CD8-positive, alpha-beta T cell (primary cell): ENCODE measurements at regions of chr5 and their contacts with region 1.

Region 1: GRCh38 chr5:73454351-73455036 is 5.9 kb upstream of the FOXD1 start:
- DNase-seq: peak in 5 of 9 experiments; percentile 27 to 71 (median 45)
- ATAC-seq: peak; percentile 82
- H3K4me3 ChIP-seq: no peak overlapping the region
- H3K4me3 Mint-ChIP-seq: no peak overlapping the region
- H3K27ac ChIP-seq: no peak overlapping the region
- H3K27ac Mint-ChIP-seq: no peak overlapping the region
- H3K4me1 ChIP-seq: peaks cover 5% of the 10 kb centered on the region
- H3K4me1 Mint-ChIP-seq: peaks cover 6% of the 10 kb centered on the region
- H3K27me3 ChIP-seq: peaks cover 36 to 39% of the 10 kb centered on the region in 2 experiments
- H3K27me3 Mint-ChIP-seq: peaks cover 67% of the 10 kb centered on the region
- CTCF ChIP-seq: peak; percentile 71

Region 2: DNA sequence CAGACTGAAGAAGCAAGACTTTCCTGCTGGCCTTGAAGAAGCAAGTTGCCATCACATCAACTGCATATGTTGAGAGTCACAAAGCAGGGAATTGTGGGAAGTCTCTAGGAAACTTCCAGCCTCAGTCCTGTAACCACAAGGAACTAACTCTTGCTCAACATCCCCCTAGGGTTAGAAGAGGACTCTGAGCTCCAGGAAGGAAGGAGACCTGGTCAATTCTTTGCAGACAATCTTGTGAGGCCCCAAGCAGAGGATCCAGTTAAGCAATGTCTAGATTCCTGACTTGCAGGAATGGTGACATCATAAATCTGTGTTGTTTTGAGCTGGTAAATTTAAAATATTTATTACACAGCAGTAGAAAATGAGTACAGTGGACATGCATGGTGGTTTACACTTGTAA is 928.7 kb before region 1 on chr5:
- CTCF ChIA-PET with region 1: no interaction called
- POLR2A ChIA-PET with region 1: no interaction called
- intact Hi-C with region 1: no loop called
- DNase-seq: no peak
- ATAC-seq: no peak
- H3K4me3 ChIP-seq: no peak overlapping the region
- H3K4me3 Mint-ChIP-seq: no peak overlapping the region
- H3K27ac ChIP-seq: no peak overlapping the region
- H3K27ac Mint-ChIP-seq: no peak overlapping the region
- H3K4me1 ChIP-seq: no peaks in the 10 kb centered on the region
- H3K4me1 Mint-ChIP-seq: no peaks in the 10 kb centered on the region
- H3K27me3 ChIP-seq: no peaks in the 10 kb centered on the region
- H3K27me3 Mint-ChIP-seq: peaks cover 14% of the 10 kb centered on the region
- CTCF ChIP-seq: no peak

Region 3: GRCh38 chr5:73135429-73136054 is 319.0 kb before region 1 on chr5:
- CTCF ChIA-PET with region 1: no interaction called
- POLR2A ChIA-PET with region 1: no interaction called
- intact Hi-C with region 1: loop called in 1 of 2 experiments (anchors 5 kb)
- DNase-seq: peak in 2 of 9 experiments; percentile 19 to 52
- ATAC-seq: peak; percentile 42
- H3K4me3 ChIP-seq: no peak overlapping the region
- H3K4me3 Mint-ChIP-seq: no peak overlapping the region
- H3K27ac ChIP-seq: no peak overlapping the region
- H3K27ac Mint-ChIP-seq: no peak overlapping the region
- H3K4me1 ChIP-seq: no peaks in the 10 kb centered on the region
- H3K4me1 Mint-ChIP-seq: peaks cover 3% of the 10 kb centered on the region
- H3K27me3 ChIP-seq: peaks cover 0 to 8% of the 10 kb centered on the region in 2 experiments
- H3K27me3 Mint-ChIP-seq: peaks cover 39% of the 10 kb centered on the region
- CTCF ChIP-seq: peak; percentile 28

Region 4: GRCh38 chr5:73215891-73216610 is 238.4 kb before region 1 on chr5:
- CTCF ChIA-PET with region 1: interaction called, 42 read pairs
- POLR2A ChIA-PET with region 1: no interaction called
- intact Hi-C with region 1: loop called (anchors 1 to 2 kb)
- DNase-seq: peak; percentile 36 to 77 (median 56)
- ATAC-seq: peak; percentile 95
- H3K4me3 ChIP-seq: peak overlapping the region; percentile 13 to 39
- H3K4me3 Mint-ChIP-seq: peak overlapping the region; percentile 69
- H3K27ac ChIP-seq: no peak overlapping the region
- H3K27ac Mint-ChIP-seq: no peak overlapping the region
- H3K4me1 ChIP-seq: peaks cover 9% of the 10 kb centered on the region
- H3K4me1 Mint-ChIP-seq: peaks cover 11% of the 10 kb centered on the region
- H3K27me3 ChIP-seq: peaks cover 15 to 27% of the 10 kb centered on the region in 2 experiments
- H3K27me3 Mint-ChIP-seq: peaks cover 76% of the 10 kb centered on the region
- CTCF ChIP-seq: peak; percentile 65

Region 5: DNA sequence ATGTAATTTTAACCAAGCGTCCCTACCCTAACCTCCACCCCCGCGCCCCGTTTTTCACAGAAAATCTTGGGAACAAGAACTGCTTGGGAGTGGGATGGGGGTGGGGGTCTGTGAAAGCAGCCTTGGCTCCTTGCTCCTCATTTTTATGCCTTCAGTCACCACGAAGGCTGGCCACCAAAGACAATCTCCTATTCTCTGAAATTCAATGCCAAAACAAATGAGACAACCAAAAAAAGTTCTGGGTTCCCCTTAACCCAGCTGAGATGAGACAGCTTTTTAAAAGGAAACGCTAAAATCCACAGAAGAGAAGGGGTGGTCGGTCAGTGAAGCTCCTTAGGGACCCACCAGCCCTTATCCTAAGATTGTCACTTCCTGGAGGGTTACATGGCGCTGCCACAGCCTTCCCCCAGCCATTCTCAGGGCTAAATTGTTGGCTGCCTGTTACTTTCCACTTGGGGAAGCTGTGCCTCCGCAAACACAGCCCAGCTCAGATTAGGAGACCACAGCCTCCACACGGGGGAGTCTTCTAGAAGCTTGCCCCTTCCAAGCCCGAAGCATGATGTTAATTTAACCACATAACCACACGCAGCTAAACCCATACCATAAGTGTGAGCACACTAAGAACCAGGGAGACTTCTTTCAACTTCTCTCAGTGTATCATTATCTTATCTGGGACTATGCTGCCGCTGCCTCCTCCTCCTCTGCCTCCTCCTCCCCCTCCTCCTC is 142.2 kb before region 1 on chr5:
- CTCF ChIA-PET with region 1: interaction called, 4 read pairs
- POLR2A ChIA-PET with region 1: no interaction called
- intact Hi-C with region 1: loop called (anchors 2 to 5 kb)
- DNase-seq: peak in 4 of 9 experiments; percentile 12 to 69 (median 46)
- ATAC-seq: peak; percentile 57
- H3K4me3 ChIP-seq: no peak overlapping the region
- H3K4me3 Mint-ChIP-seq: no peak overlapping the region
- H3K27ac ChIP-seq: no peak overlapping the region
- H3K27ac Mint-ChIP-seq: no peak overlapping the region
- H3K4me1 ChIP-seq: no peaks in the 10 kb centered on the region
- H3K4me1 Mint-ChIP-seq: peaks cover 10% of the 10 kb centered on the region
- H3K27me3 ChIP-seq: peaks cover 11 to 23% of the 10 kb centered on the region in 2 experiments
- H3K27me3 Mint-ChIP-seq: peaks cover 74% of the 10 kb centered on the region
- CTCF ChIP-seq: no peak

Region 6: GRCh38 chr5:73412597-73412988 is 41.9 kb before region 1 on chr5:
- CTCF ChIA-PET with region 1: no interaction called
- POLR2A ChIA-PET with region 1: no interaction called
- intact Hi-C with region 1: no loop called
- DNase-seq: no peak
- ATAC-seq: no peak
- H3K4me3 ChIP-seq: no peak overlapping the region
- H3K4me3 Mint-ChIP-seq: no peak overlapping the region
- H3K27ac ChIP-seq: no peak overlapping the region
- H3K27ac Mint-ChIP-seq: no peak overlapping the region
- H3K4me1 ChIP-seq: no peaks in the 10 kb centered on the region
- H3K4me1 Mint-ChIP-seq: no peaks in the 10 kb centered on the region
- H3K27me3 ChIP-seq: peaks cover 1 to 8% of the 10 kb centered on the region in 2 experiments
- H3K27me3 Mint-ChIP-seq: peaks cover 55% of the 10 kb centered on the region
- CTCF ChIP-seq: no peak

Region 7: DNA sequence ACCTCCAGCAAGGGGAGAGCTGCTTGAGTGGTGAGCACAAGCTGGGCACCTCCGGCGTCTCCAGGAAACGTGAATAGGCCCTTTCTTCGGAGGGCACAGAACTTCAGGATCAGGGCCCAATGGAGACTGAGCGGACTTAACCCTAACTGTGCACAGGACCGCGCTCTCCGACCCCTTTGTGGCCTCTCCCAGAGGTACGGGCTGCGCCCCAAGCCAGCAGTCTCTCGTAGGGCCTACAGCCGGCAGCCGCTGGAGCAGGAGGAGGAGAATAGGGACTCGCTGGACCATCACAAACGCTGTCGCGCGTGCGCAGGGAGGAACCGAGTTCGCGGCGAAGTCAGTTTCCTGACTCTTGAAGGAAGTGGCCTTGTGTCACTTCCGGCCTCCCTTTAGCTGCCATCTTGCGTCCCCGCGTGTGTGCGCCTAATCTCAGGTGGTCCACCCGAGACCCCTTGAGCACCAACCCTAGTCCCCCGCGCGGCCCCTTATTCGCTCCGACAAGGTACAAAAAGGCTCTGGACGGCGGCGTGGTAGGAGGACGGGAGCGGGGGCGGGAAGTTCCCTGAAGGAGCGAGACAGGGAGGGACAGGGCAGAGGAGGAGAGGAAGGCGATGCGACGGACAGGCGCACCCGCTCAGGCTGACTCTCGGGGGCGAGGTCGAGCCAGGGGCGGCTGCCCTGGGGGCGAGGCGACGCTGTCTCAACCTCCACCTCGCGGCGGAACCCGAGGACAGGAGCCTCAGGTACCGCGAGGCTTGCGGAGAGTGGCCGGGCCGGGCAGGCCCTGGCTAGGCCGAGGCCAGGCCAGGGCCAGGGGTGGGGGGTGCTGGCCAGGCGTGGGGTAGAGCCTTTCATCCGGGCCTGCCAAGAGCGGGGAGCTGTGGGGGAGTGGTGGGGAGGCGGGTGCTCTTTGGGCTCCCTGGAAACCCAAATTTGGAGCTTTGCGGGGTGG is 43.8 kb after region 1 on chr5 and contains the start of gene BTF3:
- CTCF ChIA-PET with region 1: interaction called, 7 read pairs
- POLR2A ChIA-PET with region 1: no interaction called
- intact Hi-C with region 1: loop called (anchors 2 kb)
- DNase-seq: peak; percentile 77 to 97 (median 93)
- ATAC-seq: peak; percentile 89
- H3K4me3 ChIP-seq: peak within 1 kb of the TSS; percentile 95 to 96
- H3K4me3 Mint-ChIP-seq: peak within 1 kb of the TSS; percentile 97
- H3K27ac ChIP-seq: peak within 1 kb of the TSS; percentile 97 to 99
- H3K27ac Mint-ChIP-seq: peak within 1 kb of the TSS; percentile 100
- H3K4me1 ChIP-seq: peaks cover 38% of the 10 kb centered on the region
- H3K4me1 Mint-ChIP-seq: peaks cover 50% of the 10 kb centered on the region
- H3K27me3 ChIP-seq: no peaks in the 10 kb centered on the region
- H3K27me3 Mint-ChIP-seq: peaks cover 5% of the 10 kb centered on the region
- CTCF ChIP-seq: no peak
- total RNA-seq, gene BTF3: 808 to 815 TPM

Region 8: DNA sequence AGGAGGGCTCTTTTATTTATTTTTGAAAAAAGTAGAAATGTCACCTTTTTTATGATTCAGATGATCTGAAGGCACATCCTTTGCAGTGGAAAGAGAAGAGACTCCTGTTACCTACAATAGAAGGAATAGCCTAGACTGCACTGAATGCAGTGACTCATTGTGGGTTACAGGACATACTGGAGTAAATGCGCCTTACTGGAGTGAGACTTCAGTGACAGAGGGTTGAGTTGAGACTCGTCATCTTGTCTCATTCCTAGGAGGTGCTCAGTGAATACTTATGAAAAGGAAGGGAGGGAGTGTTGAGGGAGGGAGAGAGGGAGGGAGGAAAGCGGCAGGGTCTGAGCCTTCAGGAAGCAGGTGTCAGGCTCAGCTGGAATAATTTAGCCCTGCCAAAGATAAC is 85.7 kb after region 1 on chr5:
- CTCF ChIA-PET with region 1: no interaction called
- POLR2A ChIA-PET with region 1: no interaction called
- intact Hi-C with region 1: no loop called
- DNase-seq: no peak
- ATAC-seq: no peak
- H3K4me3 ChIP-seq: no peak overlapping the region
- H3K4me3 Mint-ChIP-seq: no peak overlapping the region
- H3K27ac ChIP-seq: no peak overlapping the region
- H3K27ac Mint-ChIP-seq: no peak overlapping the region
- H3K4me1 ChIP-seq: no peaks in the 10 kb centered on the region
- H3K4me1 Mint-ChIP-seq: no peaks in the 10 kb centered on the region
- H3K27me3 ChIP-seq: peaks cover 0 to 8% of the 10 kb centered on the region in 2 experiments
- H3K27me3 Mint-ChIP-seq: peaks cover 24% of the 10 kb centered on the region
- CTCF ChIP-seq: no peak